ENCODE measurements at regions of chr16 and their contacts with region 1.

Region 1: GRCh38 chr16:81429045-81429521 is 15.5 kb upstream of the CMIP start:
- DNase-seq: peak; percentile 77
- H3K4me3 ChIP-seq: no peak overlapping the region
- H3K27ac ChIP-seq: no peak overlapping the region
- H3K4me1 ChIP-seq: peaks cover 74% of the 10 kb centered on the region
- CTCF ChIP-seq: peak; percentile 78

Region 2: DNA sequence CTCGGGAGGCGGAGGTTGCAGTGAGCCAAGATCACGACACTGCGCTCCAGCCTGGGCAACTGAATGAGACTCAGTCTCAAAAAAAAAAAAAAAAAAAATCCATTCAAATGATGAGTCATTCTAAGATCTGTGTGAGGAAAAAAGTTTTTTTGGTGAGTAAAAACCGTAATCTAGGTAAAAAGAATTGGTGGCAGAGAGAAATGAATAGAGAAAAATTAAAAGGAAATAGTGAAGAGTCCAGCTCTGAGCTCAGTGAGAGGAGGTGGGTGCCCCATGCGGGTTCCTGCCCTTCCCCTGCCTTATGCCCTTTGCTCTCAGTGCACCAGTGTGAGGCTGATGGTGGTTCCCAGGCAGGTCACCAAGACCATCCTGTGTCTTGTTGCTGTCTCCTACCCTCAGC is 93.4 kb before region 1 on chr16:
- CTCF ChIA-PET with region 1: no interaction called
- POLR2A ChIA-PET with region 1: no interaction called
- intact Hi-C with region 1: no loop called
- DNase-seq: no peak
- H3K4me3 ChIP-seq: no peak overlapping the region
- H3K27ac ChIP-seq: no peak overlapping the region
- H3K4me1 ChIP-seq: no peaks in the 10 kb centered on the region
- CTCF ChIP-seq: no peak

Region 3: DNA sequence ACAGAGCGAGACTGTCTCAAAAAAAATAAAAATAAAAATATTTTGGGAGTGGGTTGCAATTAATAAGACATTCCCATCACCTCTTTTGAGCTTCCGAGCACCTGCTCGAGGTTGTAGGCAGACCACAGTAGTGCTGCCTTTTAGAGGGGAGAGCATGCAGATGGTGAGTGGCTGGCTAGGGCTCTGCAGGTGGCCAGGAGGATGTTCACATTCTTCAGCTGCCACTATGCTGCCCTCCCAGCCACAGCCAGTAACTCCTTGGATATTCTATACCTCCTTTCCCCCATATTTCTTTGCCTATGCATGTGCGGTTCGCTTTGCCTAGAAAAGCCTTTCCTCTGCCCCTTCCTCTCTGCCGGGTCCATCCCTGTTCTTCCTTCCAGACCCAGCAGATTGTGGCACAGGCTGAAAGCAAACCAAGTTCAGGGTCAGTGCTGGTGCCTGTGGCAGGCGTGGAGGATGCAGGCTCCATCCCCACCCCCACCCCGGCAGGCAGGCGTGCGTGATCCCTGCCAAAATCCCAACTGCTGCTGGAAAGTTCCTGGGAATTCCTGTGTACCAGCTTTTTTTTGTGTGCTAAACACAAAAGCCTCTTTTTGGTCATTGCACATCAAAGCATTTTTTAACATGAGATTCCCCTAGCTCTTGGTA is 18.3 kb before region 1 on chr16:
- CTCF ChIA-PET with region 1: no interaction called
- POLR2A ChIA-PET with region 1: interaction called, 6 read pairs
- intact Hi-C with region 1: loop called (anchors 2 kb)
- DNase-seq: peak; percentile 62
- H3K4me3 ChIP-seq: no peak overlapping the region
- H3K27ac ChIP-seq: no peak overlapping the region
- H3K4me1 ChIP-seq: peaks cover 48% of the 10 kb centered on the region
- CTCF ChIP-seq: no peak

Region 4: DNA sequence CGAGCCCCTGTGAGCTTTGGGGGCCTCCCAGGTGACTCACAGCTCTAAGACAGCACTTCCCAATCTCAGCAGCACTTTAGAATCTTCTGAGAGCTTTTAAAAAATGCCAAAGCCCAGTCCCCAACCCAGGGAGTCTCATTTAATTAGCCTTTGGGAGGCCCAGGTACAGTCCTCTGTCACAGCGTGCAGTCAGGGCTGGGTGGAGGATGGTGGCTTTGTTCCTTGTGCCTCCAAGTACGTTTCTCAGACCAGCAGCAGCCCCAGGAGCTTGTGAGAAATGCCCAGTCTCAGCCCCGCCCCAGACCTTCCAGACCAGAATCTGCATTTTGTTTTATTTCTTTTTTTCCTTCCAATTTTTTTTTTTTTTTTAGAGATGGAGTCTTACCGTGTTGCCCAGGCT is 11.9 kb before region 1 on chr16:
- CTCF ChIA-PET with region 1: no interaction called
- POLR2A ChIA-PET with region 1: interaction called, 11 read pairs
- intact Hi-C with region 1: loop called (anchors 2 kb)
- DNase-seq: no peak
- H3K4me3 ChIP-seq: no peak overlapping the region
- H3K27ac ChIP-seq: no peak overlapping the region
- H3K4me1 ChIP-seq: peaks cover 32% of the 10 kb centered on the region
- CTCF ChIP-seq: no peak

Region 5: GRCh38 chr16:81521151-81521626 is 92.1 kb after region 1 on chr16:
- CTCF ChIA-PET with region 1: no interaction called
- POLR2A ChIA-PET with region 1: no interaction called
- intact Hi-C with region 1: no loop called
- DNase-seq: peak; percentile 84
- H3K4me3 ChIP-seq: no peak overlapping the region
- H3K27ac ChIP-seq: no peak overlapping the region
- H3K4me1 ChIP-seq: peaks cover 39% of the 10 kb centered on the region
- CTCF ChIP-seq: no peak

Region 6: DNA sequence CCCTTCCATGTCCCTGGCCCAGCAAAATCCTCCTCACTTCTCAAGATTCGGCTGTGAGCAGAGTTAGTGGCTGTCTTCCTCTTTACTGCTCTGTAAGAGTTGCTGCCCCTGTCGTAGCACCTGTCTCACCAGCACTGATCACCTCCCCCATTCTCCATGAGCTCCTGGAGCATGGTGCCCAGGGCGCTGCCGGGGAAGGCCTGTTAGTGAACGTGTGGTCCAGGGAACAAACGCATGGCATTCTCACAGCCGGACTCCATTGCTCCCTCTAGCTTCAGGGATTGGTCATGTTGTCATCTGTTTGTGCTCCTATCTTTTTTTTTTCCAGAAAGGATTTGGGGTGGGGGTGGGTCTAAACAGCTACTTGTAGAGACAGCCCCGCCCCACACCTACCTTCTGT is 156.7 kb after region 1 on chr16:
- CTCF ChIA-PET with region 1: no interaction called
- POLR2A ChIA-PET with region 1: no interaction called
- intact Hi-C with region 1: no loop called
- DNase-seq: no peak
- H3K4me3 ChIP-seq: no peak overlapping the region
- H3K27ac ChIP-seq: no peak overlapping the region
- H3K4me1 ChIP-seq: no peaks in the 10 kb centered on the region
- CTCF ChIP-seq: peak; percentile 43

Region 7: GRCh38 chr16:81778861-81779535 is 349.9 kb after region 1 on chr16 and contains the start of gene PLCG2:
- CTCF ChIA-PET with region 1: no interaction called
- POLR2A ChIA-PET with region 1: no interaction called
- intact Hi-C with region 1: no loop called
- DNase-seq: peak; percentile 85
- H3K4me3 ChIP-seq: peak within 1 kb of the TSS; percentile 85
- H3K27ac ChIP-seq: peak within 1 kb of the TSS; percentile 92
- H3K4me1 ChIP-seq: peaks cover 85% of the 10 kb centered on the region
- CTCF ChIP-seq: no peak
- total RNA-seq, gene PLCG2: 196 and 198 TPM in 2 replicates

Measured in OCI-LY7 (cell line).